Right ventricle myocardium inferior (tissue), 1 donor: ENCODE measurements at regions of chr3 and their contacts with region 1.

Region 1: GRCh38 chr3:124761250-124761796 is 31.1 kb downstream of the UMPS start:
- DNase-seq: peak; percentile 92
- ATAC-seq: peak; percentile 88

Region 2: DNA sequence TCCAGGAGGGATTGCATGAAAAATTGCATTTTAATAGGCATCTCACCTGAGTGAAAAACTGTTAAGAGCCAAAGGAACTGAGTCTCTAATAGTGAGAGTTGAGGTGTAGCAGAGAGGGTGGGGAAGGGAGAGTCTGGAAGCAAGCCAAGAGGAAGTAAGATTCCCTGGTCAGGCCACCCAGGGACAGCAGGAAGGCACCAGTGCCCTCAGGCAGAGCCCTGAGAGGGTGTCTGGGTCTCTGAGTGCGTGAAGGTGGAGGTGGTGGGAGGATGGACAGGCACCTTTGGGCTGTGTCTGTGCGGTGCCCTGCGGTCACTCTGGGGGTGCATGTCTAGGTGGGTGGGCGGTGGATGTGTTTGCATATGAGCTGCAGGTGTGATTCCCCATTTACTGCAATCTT is 469.0 kb before region 1 on chr3:
- intact Hi-C with region 1: no loop called
- DNase-seq: no peak
- ATAC-seq: no peak

Region 3: DNA sequence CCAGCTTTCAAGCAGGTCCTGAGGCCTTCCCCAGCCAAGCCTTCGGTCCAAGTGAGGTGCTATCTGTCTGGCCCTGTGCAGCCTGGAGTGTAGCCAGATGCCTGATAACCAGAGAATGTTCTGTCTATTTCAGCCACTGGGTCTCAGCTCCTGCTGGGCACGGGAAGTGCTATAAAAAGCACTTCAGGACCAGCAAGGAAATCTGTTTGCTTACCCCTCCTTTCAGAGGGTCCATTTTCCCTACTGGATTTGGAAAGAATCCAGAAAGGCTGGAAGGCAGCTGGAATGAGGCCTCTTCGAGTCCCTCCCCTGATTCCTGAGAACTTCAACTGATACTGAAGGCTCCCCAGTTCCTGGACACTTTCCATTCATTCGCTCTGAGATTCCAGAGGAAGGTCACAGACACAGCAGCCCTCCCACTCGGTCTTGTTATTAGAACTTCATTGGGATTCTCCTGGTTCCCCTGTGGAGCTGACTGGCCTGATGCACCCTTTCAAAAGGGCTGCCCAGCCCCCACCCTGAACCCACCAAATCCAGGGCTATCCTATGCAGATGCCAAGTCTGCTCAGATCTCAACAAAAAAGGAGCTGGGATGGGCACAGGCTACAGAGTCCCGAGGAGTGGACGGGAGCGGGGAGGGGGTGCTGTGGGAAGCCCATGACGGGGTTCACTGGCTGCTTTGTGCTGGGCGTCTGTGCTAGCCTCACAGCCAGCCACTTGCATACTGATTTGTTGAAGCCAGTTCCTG is 39.4 kb after region 1 on chr3:
- intact Hi-C with region 1: loop called (anchors 5 kb)
- DNase-seq: no peak
- ATAC-seq: peak; percentile 87

Region 4: DNA sequence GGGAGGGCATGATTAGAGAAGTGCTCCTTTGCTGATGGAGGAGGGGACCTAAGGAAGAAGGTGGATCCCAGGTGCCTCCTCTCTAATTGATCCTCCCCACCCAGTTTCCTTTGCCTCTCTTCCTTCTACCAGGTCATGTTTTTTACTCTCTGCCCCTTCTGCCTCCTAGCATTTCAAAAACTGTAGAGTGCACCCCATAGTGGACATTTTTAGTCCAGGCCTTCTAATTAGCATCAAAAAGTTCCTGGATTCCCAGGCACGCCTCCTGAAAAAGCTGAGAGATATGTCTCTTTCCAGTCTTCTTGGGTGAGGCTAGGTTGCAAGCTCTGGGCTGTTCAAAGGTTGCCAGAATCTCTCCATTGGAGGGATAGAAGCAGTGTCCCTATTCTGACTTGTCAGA is 144.5 kb after region 1 on chr3:
- intact Hi-C with region 1: loop called (anchors 1 kb)
- DNase-seq: no peak
- ATAC-seq: no peak

Region 5: GRCh38 chr3:124916837-124917409 is 155.6 kb after region 1 on chr3:
- intact Hi-C with region 1: no loop called
- DNase-seq: no peak
- ATAC-seq: peak; percentile 38

Region 6: GRCh38 chr3:125165189-125165947 is 404.0 kb after region 1 on chr3:
- intact Hi-C with region 1: loop called (anchors 5 kb)
- DNase-seq: no peak
- ATAC-seq: peak; percentile 89

Region 7: DNA sequence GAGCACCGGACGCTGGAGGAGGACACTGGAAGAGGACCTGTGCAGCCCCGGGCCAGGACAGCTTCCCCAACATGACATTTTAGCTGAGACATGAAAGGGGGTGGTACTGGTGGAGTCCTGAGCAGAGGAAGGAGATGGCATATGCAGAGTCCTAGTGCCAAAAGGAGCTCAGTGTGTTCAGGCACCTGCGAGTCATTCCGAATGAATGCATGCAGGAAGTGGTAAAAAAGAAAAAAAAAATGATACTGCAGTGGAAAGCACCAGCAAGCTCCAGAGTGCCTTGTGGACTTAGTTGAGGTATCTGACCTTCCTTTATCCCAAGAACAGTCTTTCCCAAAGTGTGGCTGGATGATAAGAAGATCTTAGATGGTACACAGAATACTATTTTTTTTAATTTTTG is 620.4 kb after region 1 on chr3:
- intact Hi-C with region 1: no loop called
- DNase-seq: no peak
- ATAC-seq: no peak